MCF 10A (cell line): ENCODE measurements at regions of chr7 and their contacts with region 1.

Region 1: GRCh38 chr7:155598810-155599210 is 45.7 kb upstream of the RBM33 start:
- DNase-seq: peak; percentile 73
- H3K4me3 Mint-ChIP-seq: no peak overlapping the region
- H3K27ac Mint-ChIP-seq: no peak overlapping the region
- H3K4me1 Mint-ChIP-seq: peaks cover 19% of the 10 kb centered on the region
- H3K27me3 Mint-ChIP-seq: peaks cover 37% of the 10 kb centered on the region
- CTCF ChIP-seq: peak; percentile 93

Region 2: GRCh38 chr7:155269766-155270585 is 328.8 kb before region 1 on chr7:
- CTCF ChIA-PET with region 1: no interaction called
- POLR2A ChIA-PET with region 1: no interaction called
- intact Hi-C with region 1: no loop called
- DNase-seq: peak; percentile 89
- H3K4me3 Mint-ChIP-seq: no peak overlapping the region
- H3K27ac Mint-ChIP-seq: no peak overlapping the region
- H3K4me1 Mint-ChIP-seq: no peaks in the 10 kb centered on the region
- H3K27me3 Mint-ChIP-seq: no peaks in the 10 kb centered on the region
- CTCF ChIP-seq: no peak

Region 3: DNA sequence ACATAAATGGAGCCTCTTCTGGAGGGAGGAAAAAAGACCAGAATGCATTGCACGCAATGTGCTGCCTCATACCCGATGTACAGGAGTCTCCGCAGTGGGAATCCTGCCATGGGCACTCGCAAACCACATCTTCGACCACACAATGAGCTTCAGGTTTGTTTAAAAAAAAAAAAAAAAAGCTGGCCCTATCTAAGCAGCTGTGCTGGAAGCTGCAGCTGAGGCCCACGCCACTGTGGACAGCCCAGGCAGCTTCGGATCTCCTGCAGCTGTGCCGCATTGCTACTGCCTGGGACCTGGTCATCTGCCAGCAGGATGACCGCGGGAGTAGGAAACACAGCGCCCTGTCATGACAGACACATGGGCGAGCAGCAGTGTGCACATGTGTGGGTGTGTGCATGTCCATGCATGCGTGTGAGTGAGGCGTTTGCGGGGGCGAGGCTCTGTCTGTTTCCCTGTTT is 114.9 kb before region 1 on chr7:
- CTCF ChIA-PET with region 1: no interaction called
- POLR2A ChIA-PET with region 1: no interaction called
- intact Hi-C with region 1: no loop called
- DNase-seq: peak; percentile 60
- H3K4me3 Mint-ChIP-seq: no peak overlapping the region
- H3K27ac Mint-ChIP-seq: no peak overlapping the region
- H3K4me1 Mint-ChIP-seq: no peaks in the 10 kb centered on the region
- H3K27me3 Mint-ChIP-seq: peaks cover 17% of the 10 kb centered on the region
- CTCF ChIP-seq: no peak

Region 4: DNA sequence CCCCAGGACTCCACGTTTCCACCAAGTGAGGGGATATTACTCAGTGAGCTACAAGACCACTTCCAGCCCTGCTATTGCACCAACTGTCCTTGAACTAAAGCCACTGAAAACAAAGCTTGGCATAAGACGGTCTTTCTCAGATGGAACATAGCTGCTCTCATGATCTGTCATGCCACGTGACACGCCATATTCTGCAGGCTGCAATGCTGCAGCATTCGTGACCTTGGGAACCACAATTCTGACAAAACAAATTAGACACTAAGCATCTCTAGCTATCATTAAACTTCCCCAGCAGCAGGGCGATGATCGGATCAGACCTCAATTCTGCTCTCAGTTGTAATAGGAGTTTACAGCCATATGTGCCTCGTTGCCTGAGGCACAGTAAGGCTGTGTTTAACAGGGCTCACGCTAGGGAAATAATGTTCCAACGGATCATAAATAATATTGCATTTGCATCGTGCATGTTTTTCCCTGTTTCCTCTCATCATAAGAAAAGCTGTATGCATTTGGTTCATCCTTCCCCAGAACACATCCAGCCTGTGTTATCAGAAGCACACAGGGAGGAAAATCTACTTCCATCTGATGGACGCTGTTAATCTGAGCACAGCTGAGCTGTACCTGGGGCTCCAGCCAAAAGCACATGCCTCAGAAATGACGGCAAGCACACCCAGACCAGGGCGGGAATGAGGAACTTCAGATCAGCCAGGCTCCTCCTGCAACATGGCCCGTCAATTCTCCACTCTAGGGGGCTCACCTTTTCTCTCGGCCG is 13.9 kb before region 1 on chr7:
- CTCF ChIA-PET with region 1: interaction called, 53 read pairs
- POLR2A ChIA-PET with region 1: interaction called, 3 read pairs
- intact Hi-C with region 1: no loop called
- DNase-seq: peak; percentile 50
- H3K4me3 Mint-ChIP-seq: no peak overlapping the region
- H3K27ac Mint-ChIP-seq: peak overlapping the region; percentile 29
- H3K4me1 Mint-ChIP-seq: peaks cover 18% of the 10 kb centered on the region
- H3K27me3 Mint-ChIP-seq: no peaks in the 10 kb centered on the region
- CTCF ChIP-seq: no peak

Region 5: GRCh38 chr7:155644178-155644970 is 45.6 kb after region 1 on chr7 and contains the start of gene RBM33:
- CTCF ChIA-PET with region 1: interaction called, 4 read pairs
- POLR2A ChIA-PET with region 1: interaction called, 5 read pairs
- intact Hi-C with region 1: loop called (anchors 5 kb)
- DNase-seq: peak; percentile 81
- H3K4me3 Mint-ChIP-seq: peak within 1 kb of the TSS; percentile 78
- H3K27ac Mint-ChIP-seq: peak within 1 kb of the TSS; percentile 93
- H3K4me1 Mint-ChIP-seq: peaks cover 20% of the 10 kb centered on the region
- H3K27me3 Mint-ChIP-seq: no peaks in the 10 kb centered on the region
- CTCF ChIP-seq: no peak
- total RNA-seq, gene RBM33: 80.5 and 81.9 TPM in 2 replicates

Region 6: DNA sequence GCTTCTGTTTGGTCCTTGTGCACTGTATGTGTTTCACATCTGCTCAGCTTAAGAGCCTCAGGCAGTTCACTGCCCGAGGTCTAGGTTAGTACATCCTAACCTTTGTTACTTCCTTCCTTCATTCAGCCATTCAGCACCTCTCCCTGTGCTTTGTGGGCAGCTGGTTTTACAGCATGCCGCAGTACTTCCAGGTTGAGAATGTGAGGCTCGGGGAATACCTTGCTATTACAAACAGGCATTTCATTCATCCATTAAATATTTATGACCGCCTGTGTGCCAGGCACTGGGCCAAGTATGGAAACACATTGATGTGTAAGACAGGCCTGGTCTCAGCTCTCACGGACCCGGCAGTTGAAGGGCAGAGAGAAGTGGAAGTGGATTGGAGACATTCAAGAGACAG is 131.0 kb after region 1 on chr7:
- CTCF ChIA-PET with region 1: interaction called, 74 read pairs
- POLR2A ChIA-PET with region 1: no interaction called
- intact Hi-C with region 1: no loop called
- DNase-seq: peak; percentile 50
- H3K4me3 Mint-ChIP-seq: no peak overlapping the region
- H3K27ac Mint-ChIP-seq: peak overlapping the region; percentile 75
- H3K4me1 Mint-ChIP-seq: peaks cover 22% of the 10 kb centered on the region
- H3K27me3 Mint-ChIP-seq: no peaks in the 10 kb centered on the region
- CTCF ChIP-seq: no peak

Region 7: DNA sequence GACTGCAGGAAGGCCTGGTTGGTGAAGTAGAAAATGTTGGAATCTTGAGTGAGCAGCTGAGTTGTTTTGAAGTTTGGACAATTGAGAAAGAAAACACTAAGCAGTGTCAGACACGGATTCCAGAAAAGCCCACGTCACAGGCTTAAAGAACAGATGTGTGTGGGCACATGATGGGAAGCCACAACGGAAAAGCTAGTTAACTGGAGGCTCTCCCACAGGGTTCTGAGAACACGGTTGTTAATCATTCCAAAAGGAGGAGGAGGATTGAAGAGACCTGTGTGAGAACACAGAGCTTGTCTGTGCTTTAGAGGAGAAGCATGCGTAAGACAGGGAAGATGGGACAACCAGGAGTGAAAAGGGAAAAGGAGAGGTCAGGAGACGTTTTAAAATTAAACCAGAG is 170.9 kb after region 1 on chr7:
- CTCF ChIA-PET with region 1: interaction called, 34 read pairs
- POLR2A ChIA-PET with region 1: interaction called, 4 read pairs
- intact Hi-C with region 1: loop called (anchors 1 kb)
- DNase-seq: no peak
- H3K4me3 Mint-ChIP-seq: no peak overlapping the region
- H3K27ac Mint-ChIP-seq: no peak overlapping the region
- H3K4me1 Mint-ChIP-seq: no peaks in the 10 kb centered on the region
- H3K27me3 Mint-ChIP-seq: no peaks in the 10 kb centered on the region
- CTCF ChIP-seq: no peak